ENCODE measurements at regions of chr3 and their contacts with region 1.

Region 1: GRCh38 chr3:42755681-42756578 is 17.1 kb downstream of the CCDC13 start:
- DNase-seq: no peak
- ATAC-seq: peak; percentile 32 to 78 (median 55)
- H3K4me3 ChIP-seq: no peak overlapping the region
- H3K27ac ChIP-seq: no peak overlapping the region
- H3K4me1 ChIP-seq: peaks cover 0 to 10% (median 0%) of the 10 kb centered on the region in 12 donors
- H3K27me3 ChIP-seq: no peaks in the 10 kb centered on the region
- CTCF ChIP-seq: peak in 11 of 12 donors; percentile 11 to 58 (median 36)
- POLR2A ChIP-seq: no peak

Region 2: DNA sequence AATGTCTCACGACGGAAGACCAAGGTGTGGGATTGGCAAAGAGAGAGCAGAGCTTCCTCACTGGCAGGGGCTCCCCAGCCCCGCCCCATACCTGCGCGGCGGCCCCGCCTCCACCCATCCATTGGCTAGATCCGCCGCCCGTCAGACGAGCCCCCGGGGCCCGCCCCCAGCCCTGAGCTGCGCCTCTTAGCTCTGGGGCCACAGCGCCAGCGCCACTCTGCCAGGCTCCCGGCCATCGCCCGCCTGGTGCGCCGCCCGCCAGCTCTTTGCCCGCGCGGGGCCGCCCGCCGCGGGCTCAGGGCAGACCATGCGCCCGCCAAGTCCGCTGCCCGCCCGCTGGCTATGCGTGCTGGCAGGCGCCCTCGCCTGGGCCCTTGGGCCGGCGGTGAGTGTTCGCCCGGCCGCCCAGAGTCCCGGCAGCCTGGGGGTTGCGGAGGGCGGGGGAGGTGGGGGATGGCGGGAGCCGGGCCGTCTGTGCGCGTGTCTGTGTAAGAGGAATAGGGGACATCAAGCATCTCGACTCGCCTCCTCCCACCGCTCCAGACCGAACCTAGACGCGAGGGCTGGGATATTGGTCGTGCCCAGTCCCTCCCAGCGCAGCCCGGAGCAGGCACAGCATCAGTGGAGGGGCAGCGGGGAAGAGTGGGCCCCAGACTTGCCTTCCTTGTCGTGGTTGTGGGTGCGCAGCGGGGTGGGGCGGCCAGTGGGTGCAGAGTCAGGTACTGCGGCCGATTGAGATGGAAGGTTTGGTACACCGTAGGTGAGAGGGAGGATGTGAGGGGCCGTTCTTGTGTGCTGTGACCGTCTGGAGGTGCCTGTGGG is 253.3 kb before region 1 on chr3 and contains the start of gene VIPR1:
- intact Hi-C with region 1: loop called in 1 of 10 experiments (anchors 10 kb)
- DNase-seq: peak; percentile 65 to 92 (median 81)
- ATAC-seq: peak; percentile 87 to 93 (median 91)
- H3K4me3 ChIP-seq: peak within 1 kb of the TSS; percentile 13 to 63 (median 48)
- H3K27ac ChIP-seq: peak within 1 kb of the TSS in 5 of 12 donors; percentile 8 to 66 (median 43)
- H3K4me1 ChIP-seq: peaks cover 0 to 28% (median 12%) of the 10 kb centered on the region in 12 donors
- H3K27me3 ChIP-seq: peaks cover 0 to 34% (median 8%) of the 10 kb centered on the region in 9 donors
- CTCF ChIP-seq: no peak
- POLR2A ChIP-seq: no peak
- total RNA-seq, gene VIPR1: 0.96 to 5.4 (median 1.7) TPM

Region 3: DNA sequence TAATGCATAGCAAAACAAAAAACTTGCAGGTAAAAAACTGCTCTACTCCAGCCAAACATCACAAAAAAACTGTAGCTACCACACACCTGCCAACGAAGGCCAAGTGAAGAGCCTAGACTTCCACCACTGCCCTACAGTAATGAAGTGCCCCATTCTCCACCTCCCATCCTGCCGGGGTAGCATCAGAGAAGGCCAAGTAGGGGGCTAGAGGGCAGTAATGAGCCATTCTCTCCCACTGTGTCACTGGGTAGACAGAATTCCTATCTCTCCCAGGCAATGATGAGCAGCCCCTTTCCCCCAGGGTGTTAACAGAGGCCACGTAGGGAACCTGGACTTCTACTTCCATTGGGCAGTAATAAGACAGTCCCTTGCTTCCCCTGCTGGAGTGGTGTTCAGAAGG is 183.7 kb before region 1 on chr3:
- intact Hi-C with region 1: loop called in 2 of 10 experiments (anchors 5 to 10 kb)
- DNase-seq: no peak
- ATAC-seq: peak; percentile 66 to 83 (median 78)
- H3K4me3 ChIP-seq: no peak overlapping the region
- H3K27ac ChIP-seq: no peak overlapping the region
- H3K4me1 ChIP-seq: peaks cover 0 to 5% (median 0%) of the 10 kb centered on the region in 12 donors
- H3K27me3 ChIP-seq: no peaks in the 10 kb centered on the region
- CTCF ChIP-seq: peak in 11 of 12 donors; percentile 12 to 54 (median 34)
- POLR2A ChIP-seq: no peak

Measured in heart left ventricle (tissue), 16 donors.